ENCODE measurements at regions of chr14 and their contacts with region 1.

Region 1: GRCh38 chr14:23327947-23328744 is 6.9 kb downstream of the PABPN1 start:
- DNase-seq: peak in 4 of 5 donors; percentile 48 to 57 (median 56)
- ATAC-seq: peak in 3 of 4 donors; percentile 50 to 65 (median 61)
- H3K4me3 ChIP-seq: no peak overlapping the region
- H3K27ac ChIP-seq: peak overlapping the region in 1 of 12 donors; percentile 24
- H3K4me1 ChIP-seq: peaks cover 0 to 11% (median 3%) of the 10 kb centered on the region in 12 donors
- H3K27me3 ChIP-seq: no peaks in the 10 kb centered on the region
- CTCF ChIP-seq: peak; percentile 79 to 95 (median 88)
- POLR2A ChIP-seq: no peak

Region 2: GRCh38 chr14:23301288-23301968 is 26.7 kb before region 1 on chr14:
- intact Hi-C with region 1: no loop called
- DNase-seq: peak; percentile 98 to 99 (median 99)
- ATAC-seq: peak; percentile 76 to 90 (median 85)
- H3K4me3 ChIP-seq: peak overlapping the region; percentile 77 to 95 (median 82)
- H3K27ac ChIP-seq: peak overlapping the region; percentile 94 to 100 (median 98)
- H3K4me1 ChIP-seq: peaks cover 0 to 61% (median 33%) of the 10 kb centered on the region in 12 donors
- H3K27me3 ChIP-seq: no peaks in the 10 kb centered on the region
- CTCF ChIP-seq: peak; percentile 53 to 98 (median 73)
- POLR2A ChIP-seq: no peak

Region 3: GRCh38 chr14:23364164-23365015 is 36.2 kb after region 1 on chr14:
- intact Hi-C with region 1: loop called in 1 of 10 experiments (anchors 5 kb)
- DNase-seq: peak in 1 of 5 donors; percentile 55
- ATAC-seq: peak in 3 of 4 donors; percentile 13 to 29 (median 13)
- H3K4me3 ChIP-seq: peak overlapping the region; percentile 25 to 69 (median 56)
- H3K27ac ChIP-seq: peak overlapping the region; percentile 62 to 96 (median 84)
- H3K4me1 ChIP-seq: peaks cover 0 to 32% (median 6%) of the 10 kb centered on the region in 12 donors
- H3K27me3 ChIP-seq: peaks cover 0 to 41% (median 0%) of the 10 kb centered on the region in 9 donors
- CTCF ChIP-seq: no peak
- POLR2A ChIP-seq: no peak

Region 4: GRCh38 chr14:23446291-23446851 is 118.2 kb after region 1 on chr14:
- intact Hi-C with region 1: loop called in 9 of 10 experiments (anchors 2 to 10 kb)
- DNase-seq: no peak
- ATAC-seq: peak; percentile 10 to 47 (median 30)
- H3K4me3 ChIP-seq: no peak overlapping the region
- H3K27ac ChIP-seq: peak overlapping the region in 8 of 12 donors; percentile 6 to 97 (median 72)
- H3K4me1 ChIP-seq: peaks cover 0 to 41% (median 15%) of the 10 kb centered on the region in 12 donors
- H3K27me3 ChIP-seq: peaks cover 0 to 6% (median 0%) of the 10 kb centered on the region in 9 donors
- CTCF ChIP-seq: peak in 7 of 12 donors; percentile 21 to 51 (median 38)
- POLR2A ChIP-seq: no peak

Region 5: DNA sequence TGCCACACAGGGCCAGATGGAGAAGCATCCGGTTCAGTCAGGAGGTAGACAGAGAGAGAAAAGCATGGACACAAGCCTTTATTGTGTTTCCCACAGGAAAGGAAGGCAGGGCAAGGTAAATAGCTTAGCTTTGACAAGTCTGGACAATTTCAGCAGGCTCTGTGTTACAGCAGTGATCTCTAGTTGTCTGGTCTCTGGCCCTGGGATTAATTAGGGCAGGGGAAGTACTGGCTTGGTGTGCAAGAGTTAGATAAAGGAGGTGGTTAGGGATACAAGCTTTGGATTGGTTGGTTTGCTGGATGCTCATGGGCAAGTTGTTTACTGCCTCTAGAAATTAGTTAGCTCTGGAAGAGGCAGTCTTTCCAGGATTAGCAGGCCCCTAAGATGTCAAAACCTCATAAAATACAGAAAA is 126.3 kb after region 1 on chr14:
- intact Hi-C with region 1: loop called in 7 of 10 experiments (anchors 2 to 10 kb)
- DNase-seq: no peak
- ATAC-seq: peak in 2 of 4 donors; percentile 21 to 55
- H3K4me3 ChIP-seq: no peak overlapping the region
- H3K27ac ChIP-seq: peak overlapping the region in 1 of 12 donors; percentile 13
- H3K4me1 ChIP-seq: peaks cover 0 to 6% (median 0%) of the 10 kb centered on the region in 12 donors
- H3K27me3 ChIP-seq: peaks cover 0 to 21% (median 0%) of the 10 kb centered on the region in 9 donors
- CTCF ChIP-seq: no peak
- POLR2A ChIP-seq: no peak

Region 6: GRCh38 chr14:23469127-23469905 is 141.2 kb after region 1 on chr14 and contains the start of gene NGDN:
- intact Hi-C with region 1: loop called in 4 of 10 experiments (anchors 5 kb)
- DNase-seq: peak; percentile 94 to 96 (median 95)
- ATAC-seq: peak; percentile 95 to 97 (median 96)
- H3K4me3 ChIP-seq: peak within 1 kb of the TSS; percentile 71 to 99 (median 84)
- H3K27ac ChIP-seq: peak within 1 kb of the TSS; percentile 51 to 90 (median 80)
- H3K4me1 ChIP-seq: peaks cover 0 to 15% (median 7%) of the 10 kb centered on the region in 12 donors
- H3K27me3 ChIP-seq: no peaks in the 10 kb centered on the region
- CTCF ChIP-seq: peak; percentile 73 to 96 (median 90)
- POLR2A ChIP-seq: peak in 1 of 2 donors; percentile 46
- total RNA-seq, gene NGDN: 16.5 to 23.4 (median 18.7) TPM

Region 7: GRCh38 chr14:23567192-23568020 is 239.3 kb after region 1 on chr14 and contains the start of gene AP1G2:
- intact Hi-C with region 1: loop called in 6 of 10 experiments (anchors 5 to 10 kb)
- DNase-seq: peak; percentile 84 to 92 (median 88)
- ATAC-seq: peak; percentile 55 to 82 (median 72)
- H3K4me3 ChIP-seq: peak within 1 kb of the TSS; percentile 19 to 80 (median 66)
- H3K27ac ChIP-seq: peak within 1 kb of the TSS in 11 of 12 donors; percentile 38 to 77 (median 64)
- H3K4me1 ChIP-seq: peaks cover 0 to 40% (median 10%) of the 10 kb centered on the region in 12 donors
- H3K27me3 ChIP-seq: peaks cover 0 to 11% (median 0%) of the 10 kb centered on the region in 9 donors
- CTCF ChIP-seq: no peak
- POLR2A ChIP-seq: peak in 1 of 2 donors; percentile 39
- total RNA-seq, gene AP1G2: 7.2 to 33.8 (median 11.6) TPM

Measured in heart left ventricle (tissue), 16 donors.